Activated CD8-positive, alpha-beta T cell treated with anti-CD3 and anti-CD28 coated beads for 36 hours (primary cell): ENCODE measurements at regions of chr6 and their contacts with region 1.

Region 1: DNA sequence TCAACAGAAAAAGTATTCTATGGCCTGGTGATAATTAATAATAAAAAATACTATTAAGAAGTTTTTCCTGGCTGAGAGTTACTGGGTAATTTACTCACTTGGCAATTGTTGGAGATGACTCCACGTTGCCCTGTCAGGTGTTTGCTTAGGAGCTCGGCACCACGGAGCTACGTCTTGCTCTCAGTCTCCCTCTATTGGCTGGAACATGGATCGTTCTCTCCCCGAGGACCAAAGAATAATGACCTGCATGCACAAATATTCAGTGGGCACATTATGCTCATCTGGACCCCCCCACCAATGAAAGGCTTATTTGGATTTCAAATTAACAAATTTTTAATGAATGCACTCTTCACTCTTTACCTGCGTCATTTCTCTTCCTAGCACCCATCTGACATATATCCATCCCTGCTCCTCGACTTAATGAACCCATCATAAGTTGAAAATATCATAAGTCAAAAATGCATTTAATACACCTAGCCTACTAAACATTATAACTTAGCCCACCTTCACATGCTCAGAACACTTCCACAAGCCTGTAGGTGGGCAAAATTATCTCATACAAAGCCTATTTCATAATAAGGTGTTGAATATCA is 71.0 kb upstream of the CD83 start:
- DNase-seq: peak; percentile 61
- ATAC-seq: peak; percentile 89
- H3K4me3 Mint-ChIP-seq: no peak overlapping the region
- H3K27ac Mint-ChIP-seq: no peak overlapping the region
- H3K4me1 Mint-ChIP-seq: peaks cover 4% of the 10 kb centered on the region
- H3K27me3 Mint-ChIP-seq: peaks cover 19% of the 10 kb centered on the region
- CTCF ChIP-seq: peak; percentile 69

Region 2: DNA sequence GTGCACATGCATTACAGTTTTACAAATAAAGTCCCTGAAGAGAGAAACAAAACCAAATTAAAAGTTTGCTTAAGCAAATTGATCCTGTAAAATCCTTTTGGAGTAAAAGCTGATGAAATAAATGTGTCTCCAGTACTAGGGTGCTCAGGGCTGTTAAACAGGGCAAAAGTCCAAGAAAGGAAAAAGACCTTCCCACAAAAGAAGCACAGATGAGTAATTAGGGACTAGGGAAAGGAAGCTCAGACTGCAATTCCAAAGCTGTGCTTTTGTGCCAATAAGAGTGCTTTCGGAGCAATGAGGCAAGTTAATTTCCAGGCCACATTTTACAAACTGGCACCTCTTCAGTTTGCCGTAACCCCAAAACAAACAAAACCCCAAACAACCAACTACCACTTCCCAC is 132.2 kb before region 1 on chr6:
- CTCF ChIA-PET with region 1: interaction called, 68 read pairs
- POLR2A ChIA-PET with region 1: no interaction called
- intact Hi-C with region 1: loop called (anchors 5 kb)
- DNase-seq: no peak
- ATAC-seq: no peak
- H3K4me3 Mint-ChIP-seq: no peak overlapping the region
- H3K27ac Mint-ChIP-seq: no peak overlapping the region
- H3K4me1 Mint-ChIP-seq: no peaks in the 10 kb centered on the region
- H3K27me3 Mint-ChIP-seq: peaks cover 31% of the 10 kb centered on the region
- CTCF ChIP-seq: no peak

Region 3: GRCh38 chr6:14059791-14060444 is 13.3 kb after region 1 on chr6:
- CTCF ChIA-PET with region 1: interaction called, 30 read pairs
- POLR2A ChIA-PET with region 1: no interaction called
- intact Hi-C with region 1: no loop called
- DNase-seq: no peak
- ATAC-seq: no peak
- H3K4me3 Mint-ChIP-seq: no peak overlapping the region
- H3K27ac Mint-ChIP-seq: no peak overlapping the region
- H3K4me1 Mint-ChIP-seq: no peaks in the 10 kb centered on the region
- H3K27me3 Mint-ChIP-seq: peaks cover 25% of the 10 kb centered on the region
- CTCF ChIP-seq: no peak

Region 4: DNA sequence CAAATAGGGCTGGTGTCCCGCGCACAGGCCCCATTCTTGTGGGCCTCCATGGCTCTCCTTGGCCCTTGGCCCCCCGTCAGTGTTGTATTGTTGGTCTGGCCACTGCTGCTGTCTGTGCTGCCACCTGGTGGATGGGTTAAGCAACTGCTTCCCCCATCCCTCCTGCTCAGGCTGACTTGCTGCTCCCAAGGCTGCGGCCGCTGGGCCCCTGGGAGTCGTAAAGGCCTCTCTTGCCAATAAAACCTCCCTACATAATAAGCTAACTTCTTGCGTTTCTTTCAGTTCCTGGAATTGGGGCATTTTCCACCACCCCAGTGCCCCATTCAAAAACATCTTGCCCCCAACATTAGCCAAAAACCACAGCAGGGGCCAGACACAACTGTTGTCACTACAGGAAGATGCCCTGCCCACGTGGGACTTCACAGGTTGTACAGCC is 98.1 kb after region 1 on chr6:
- CTCF ChIA-PET with region 1: interaction called, 20 read pairs
- POLR2A ChIA-PET with region 1: no interaction called
- intact Hi-C with region 1: no loop called
- DNase-seq: peak; percentile 74
- ATAC-seq: peak; percentile 99
- H3K4me3 Mint-ChIP-seq: no peak overlapping the region
- H3K27ac Mint-ChIP-seq: no peak overlapping the region
- H3K4me1 Mint-ChIP-seq: peaks cover 4% of the 10 kb centered on the region
- H3K27me3 Mint-ChIP-seq: no peaks in the 10 kb centered on the region
- CTCF ChIP-seq: peak; percentile 94

Region 5: GRCh38 chr6:14241255-14242070 is 194.9 kb after region 1 on chr6:
- CTCF ChIA-PET with region 1: no interaction called
- POLR2A ChIA-PET with region 1: no interaction called
- intact Hi-C with region 1: no loop called
- DNase-seq: no peak
- ATAC-seq: no peak
- H3K4me3 Mint-ChIP-seq: no peak overlapping the region
- H3K27ac Mint-ChIP-seq: no peak overlapping the region
- H3K4me1 Mint-ChIP-seq: peaks cover 7% of the 10 kb centered on the region
- H3K27me3 Mint-ChIP-seq: no peaks in the 10 kb centered on the region
- CTCF ChIP-seq: no peak

Region 6: GRCh38 chr6:14763139-14763538 is 716.6 kb after region 1 on chr6:
- CTCF ChIA-PET with region 1: no interaction called
- POLR2A ChIA-PET with region 1: no interaction called
- intact Hi-C with region 1: no loop called
- DNase-seq: no peak
- ATAC-seq: no peak
- H3K4me3 Mint-ChIP-seq: no peak overlapping the region
- H3K27ac Mint-ChIP-seq: no peak overlapping the region
- H3K4me1 Mint-ChIP-seq: peaks cover 15% of the 10 kb centered on the region
- H3K27me3 Mint-ChIP-seq: no peaks in the 10 kb centered on the region
- CTCF ChIP-seq: no peak